H1 (cell line): ENCODE measurements at regions of chr14 and their contacts with region 1.

Region 1: DNA sequence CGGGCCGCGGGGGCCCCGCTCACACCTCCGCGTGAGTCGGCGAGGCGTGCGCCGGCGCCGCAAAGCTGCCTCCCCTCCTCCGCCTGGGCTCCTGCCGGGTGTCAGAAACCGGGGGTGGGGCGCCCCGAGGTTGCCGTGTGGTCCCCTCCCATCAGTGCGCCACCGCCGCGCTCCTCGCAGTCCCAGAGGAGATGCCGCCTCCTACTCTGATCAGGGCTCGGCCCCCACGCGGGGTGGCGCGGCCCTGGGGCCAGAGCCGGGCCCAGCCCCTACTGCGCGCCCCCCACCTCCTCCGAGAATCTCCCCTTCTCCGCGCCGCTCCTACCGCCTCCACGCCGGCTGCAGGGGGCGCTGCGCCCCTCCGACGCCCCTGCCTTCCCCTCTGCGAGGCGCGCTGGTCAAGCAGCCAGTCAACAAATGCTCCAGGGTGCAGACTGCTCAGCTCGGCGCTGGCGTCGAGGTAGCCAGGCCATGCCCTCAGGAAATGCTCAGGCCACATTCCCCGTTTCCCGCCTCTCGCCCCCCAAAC is 467 bp upstream of the JAG2 start:
- DNase-seq: peak in 1 of 2 experiments; percentile 88
- H3K4me3 ChIP-seq: peak overlapping the region; percentile 21 to 56 (median 26); a peak in 6 of 8 replicates
- H3K27ac ChIP-seq: no peak overlapping the region
- H3K4me1 ChIP-seq: peaks cover 0 to 6% (median 3%) of the 10 kb centered on the region in 4 experiments; a peak in 6 of 7 replicates
- H3K27me3 ChIP-seq: peaks cover 9 to 26% (median 18%) of the 10 kb centered on the region in 4 experiments
- CTCF ChIP-seq: peak in 2 of 3 experiments; percentile 78 to 79; a peak in 3 of 4 replicates
- EP300 ChIP-seq: peak in 1 of 2 experiments; percentile 19; a peak in 1 of 3 replicates
- POLR2A ChIP-seq: no peak
- RAD21 ChIP-seq: peak; percentile 57 to 75

Region 2: DNA sequence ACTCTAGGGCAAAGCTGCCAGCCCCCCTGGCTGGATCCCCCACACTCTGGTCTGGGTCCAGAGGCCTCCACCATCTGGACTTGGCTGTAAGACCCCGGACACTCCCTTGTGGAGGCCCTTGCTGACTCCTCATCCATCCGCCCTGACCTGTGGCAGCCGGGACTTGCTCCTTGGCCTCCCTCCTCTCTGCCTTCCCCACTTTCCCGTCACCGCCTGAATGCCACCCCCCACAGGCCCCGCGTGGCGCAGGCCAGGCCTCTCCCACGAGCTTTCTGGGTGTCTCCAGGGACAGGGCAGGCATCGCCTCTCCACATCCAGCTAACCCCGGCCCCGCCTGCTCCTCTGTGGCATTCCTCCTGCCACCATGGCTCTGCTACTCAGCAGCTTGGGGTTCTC is 14.6 kb before region 1 on chr14:
- CTCF ChIA-PET with region 1: interaction called, 12 read pairs
- POLR2A ChIA-PET with region 1: no interaction called
- DNase-seq: no peak
- H3K4me3 ChIP-seq: no peak overlapping the region
- H3K27ac ChIP-seq: no peak overlapping the region
- H3K4me1 ChIP-seq: peaks cover 0 to 6% (median 0%) of the 10 kb centered on the region in 4 experiments; a peak in 4 of 7 replicates
- H3K27me3 ChIP-seq: no peaks in the 10 kb centered on the region
- CTCF ChIP-seq: no peak
- EP300 ChIP-seq: no peak
- POLR2A ChIP-seq: no peak
- RAD21 ChIP-seq: no peak

Region 3: GRCh38 chr14:105180592-105181548 is 11.8 kb after region 1 on chr14 and contains the start of gene NUDT14:
- CTCF ChIA-PET with region 1: interaction called, 27 read pairs
- POLR2A ChIA-PET with region 1: interaction called, 6 read pairs
- DNase-seq: peak in 1 of 2 experiments; percentile 92
- H3K4me3 ChIP-seq: peak within 1 kb of the TSS; percentile 33 to 72 (median 53); a peak in 7 of 8 replicates
- H3K27ac ChIP-seq: no peak within 1 kb of the TSS
- H3K4me1 ChIP-seq: peaks cover 0 to 10% (median 1%) of the 10 kb centered on the region in 4 experiments; a peak in 1 of 7 replicates
- H3K27me3 ChIP-seq: peaks cover 0 to 10% (median 8%) of the 10 kb centered on the region in 4 experiments; a peak in 4 of 7 replicates
- CTCF ChIP-seq: no peak
- EP300 ChIP-seq: no peak
- POLR2A ChIP-seq: no peak
- RAD21 ChIP-seq: no peak
- total RNA-seq, gene NUDT14: 33.3 and 33.6 TPM in 2 replicates

Region 4: GRCh38 chr14:105187935-105188524 is 19.0 kb after region 1 on chr14:
- CTCF ChIA-PET with region 1: interaction called, 27 read pairs
- POLR2A ChIA-PET with region 1: interaction called, 4 read pairs
- DNase-seq: no peak
- H3K4me3 ChIP-seq: no peak overlapping the region
- H3K27ac ChIP-seq: no peak overlapping the region
- H3K4me1 ChIP-seq: peaks cover 0 to 13% (median 0%) of the 10 kb centered on the region in 4 experiments; a peak in 1 of 7 replicates
- H3K27me3 ChIP-seq: peaks cover 0 to 2% (median 0%) of the 10 kb centered on the region in 4 experiments; a peak in 2 of 7 replicates
- CTCF ChIP-seq: peak in 2 of 3 experiments; percentile 37 to 41; a peak in 3 of 4 replicates
- EP300 ChIP-seq: no peak
- POLR2A ChIP-seq: no peak
- RAD21 ChIP-seq: peak; percentile 51 to 65

Region 5: DNA sequence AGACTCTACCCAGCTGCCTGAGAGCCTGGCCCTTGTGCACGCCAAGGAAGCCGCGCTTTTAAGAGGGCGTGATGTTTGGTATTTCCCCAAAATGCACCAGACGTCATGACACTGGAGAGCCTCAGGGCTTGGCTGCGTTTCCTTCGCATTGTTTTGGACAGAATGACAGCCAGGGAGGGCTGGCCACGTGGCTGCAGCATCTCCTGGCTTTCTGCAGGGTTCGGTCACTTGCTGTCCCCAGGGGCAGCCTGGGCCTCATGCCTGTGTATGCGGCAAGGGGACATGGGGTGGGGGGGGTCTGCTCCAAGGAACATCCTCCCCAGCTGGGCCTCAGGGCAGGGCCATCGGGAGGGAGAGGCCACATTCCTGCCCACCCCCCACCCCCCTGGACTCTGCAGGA is 28.2 kb after region 1 on chr14:
- CTCF ChIA-PET with region 1: interaction called, 36 read pairs
- POLR2A ChIA-PET with region 1: interaction called, 3 read pairs
- DNase-seq: no peak
- H3K4me3 ChIP-seq: peak overlapping the region in 1 of 4 experiments; percentile 58; a peak in 2 of 8 replicates
- H3K27ac ChIP-seq: no peak overlapping the region
- H3K4me1 ChIP-seq: peaks cover 0 to 17% (median 13%) of the 10 kb centered on the region in 4 experiments; a peak in 5 of 7 replicates
- H3K27me3 ChIP-seq: peaks cover 0 to 37% (median 19%) of the 10 kb centered on the region in 4 experiments; a peak in 5 of 7 replicates
- CTCF ChIP-seq: no peak
- EP300 ChIP-seq: no peak
- POLR2A ChIP-seq: no peak
- RAD21 ChIP-seq: no peak